ENCODE measurements at regions of chr17 and their contacts with region 1.

Region 1: DNA sequence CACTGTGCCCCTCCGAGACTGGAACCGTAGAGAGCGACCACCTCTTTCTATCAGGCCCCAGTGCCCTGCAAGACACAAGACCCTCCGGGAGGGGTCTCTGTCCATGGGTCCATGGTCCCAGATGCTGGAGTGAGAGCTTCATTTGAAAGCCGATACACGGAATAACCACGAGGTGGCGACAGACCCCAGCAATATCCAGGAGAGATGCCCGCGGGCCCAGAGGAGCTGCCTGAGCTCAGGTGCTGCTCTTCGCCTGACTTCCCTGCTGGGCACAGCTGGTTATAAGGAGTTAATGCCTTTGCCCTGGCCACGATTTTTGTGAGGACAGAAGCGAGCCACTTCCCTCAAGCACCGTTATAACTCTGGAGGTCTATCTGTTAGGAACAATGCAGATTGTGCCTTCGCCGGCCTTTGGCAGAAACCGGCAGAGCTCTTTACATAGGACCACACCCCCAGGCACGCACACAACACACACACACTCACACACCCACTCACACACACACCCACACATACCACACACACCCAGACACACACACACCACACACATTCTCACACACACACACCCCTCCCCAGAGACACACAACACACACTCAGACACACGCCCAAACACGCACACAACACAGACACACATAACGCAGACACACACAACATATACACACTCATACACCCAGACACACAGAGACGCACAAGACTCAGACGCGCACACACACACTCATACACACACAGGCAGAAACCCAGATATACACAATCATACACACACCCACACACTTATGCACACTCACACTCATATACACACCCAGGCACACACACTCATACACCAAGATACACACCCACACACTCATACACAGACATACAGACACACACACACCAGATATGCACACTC is 436.4 kb downstream of the SOX9 start:
- DNase-seq: peak; percentile 91
- H3K4me3 ChIP-seq: no peak overlapping the region; a peak in 1 of 4 replicates
- H3K27ac ChIP-seq: no peak overlapping the region
- H3K4me1 ChIP-seq: no peaks in the 10 kb centered on the region
- H3K27me3 ChIP-seq: no peaks in the 10 kb centered on the region
- CTCF ChIP-seq: peak; percentile 98
- EP300 ChIP-seq: no peak
- RAD21 ChIP-seq: peak; percentile 93

Region 2: GRCh38 chr17:70767102-70767701 is 1790.0 kb before region 1 on chr17:
- CTCF ChIA-PET with region 1: interaction called, 16 read pairs
- POLR2A ChIA-PET with region 1: no interaction called
- DNase-seq: peak; percentile 60
- H3K4me3 ChIP-seq: no peak overlapping the region; a peak in 1 of 4 replicates
- H3K27ac ChIP-seq: no peak overlapping the region
- H3K4me1 ChIP-seq: no peaks in the 10 kb centered on the region; a peak in 1 of 4 replicates
- H3K27me3 ChIP-seq: no peaks in the 10 kb centered on the region
- CTCF ChIP-seq: peak; percentile 99
- EP300 ChIP-seq: no peak
- RAD21 ChIP-seq: peak; percentile 95

Region 3: DNA sequence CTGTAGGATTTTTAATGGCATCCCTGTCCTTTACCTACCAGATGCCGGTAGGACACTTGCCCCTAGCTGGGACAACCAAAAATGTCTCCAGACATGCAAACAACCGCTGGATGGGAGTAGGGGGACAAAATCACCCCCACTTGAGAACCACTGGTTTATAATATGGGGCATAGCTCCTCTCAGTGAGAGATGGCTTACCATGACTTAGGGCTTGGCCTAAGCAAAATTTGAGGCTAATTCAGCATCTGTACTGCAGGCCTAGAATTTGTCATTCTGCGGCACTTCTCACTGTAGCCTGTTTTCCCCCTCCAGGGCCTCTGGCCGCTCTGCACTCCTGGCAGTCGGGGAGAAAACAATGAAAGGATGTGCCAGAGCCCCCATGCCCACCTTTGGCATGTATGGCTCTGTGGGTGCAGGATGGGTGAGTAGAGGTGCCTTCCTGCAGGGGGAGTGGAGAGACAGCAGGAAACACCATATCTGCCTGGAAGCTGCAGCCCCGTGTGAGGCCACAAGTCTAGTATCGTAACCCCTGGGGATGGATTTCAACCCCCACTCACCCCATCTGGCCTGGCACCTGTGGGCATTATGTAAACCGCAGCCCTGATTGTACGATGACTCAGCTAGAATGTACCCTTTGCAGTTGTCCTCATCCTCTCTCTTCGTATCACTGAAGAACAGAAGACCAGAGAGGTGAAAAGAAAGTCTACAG is 168.3 kb before region 1 on chr17:
- CTCF ChIA-PET with region 1: no interaction called
- POLR2A ChIA-PET with region 1: no interaction called
- DNase-seq: no peak
- H3K4me3 ChIP-seq: no peak overlapping the region
- H3K27ac ChIP-seq: peak overlapping the region in 1 of 2 experiments; percentile 93; a peak in 2 of 4 replicates
- H3K4me1 ChIP-seq: peaks cover 6 to 67% of the 10 kb centered on the region in 2 experiments; a peak in 3 of 4 replicates
- H3K27me3 ChIP-seq: no peaks in the 10 kb centered on the region
- CTCF ChIP-seq: peak; percentile 45
- EP300 ChIP-seq: peak in 1 of 2 experiments; percentile 75; a peak in 1 of 4 replicates
- RAD21 ChIP-seq: peak; percentile 39

Region 4: GRCh38 chr17:72403713-72404209 is 153.4 kb before region 1 on chr17:
- CTCF ChIA-PET with region 1: no interaction called
- POLR2A ChIA-PET with region 1: no interaction called
- DNase-seq: no peak
- H3K4me3 ChIP-seq: no peak overlapping the region
- H3K27ac ChIP-seq: peak overlapping the region in 1 of 2 experiments; percentile 99; a peak in 1 of 4 replicates
- H3K4me1 ChIP-seq: peaks cover 22 to 51% of the 10 kb centered on the region in 2 experiments
- H3K27me3 ChIP-seq: no peaks in the 10 kb centered on the region
- CTCF ChIP-seq: no peak
- EP300 ChIP-seq: no peak
- RAD21 ChIP-seq: no peak

Region 5: GRCh38 chr17:72465191-72466024 is 91.8 kb before region 1 on chr17:
- CTCF ChIA-PET with region 1: no interaction called
- POLR2A ChIA-PET with region 1: no interaction called
- DNase-seq: no peak
- H3K4me3 ChIP-seq: peak overlapping the region in 1 of 2 experiments; percentile 38; a peak in 1 of 4 replicates
- H3K27ac ChIP-seq: peak overlapping the region in 1 of 2 experiments; percentile 93; a peak in 2 of 4 replicates
- H3K4me1 ChIP-seq: peaks cover 2 to 12% of the 10 kb centered on the region in 2 experiments; a peak in 3 of 4 replicates
- H3K27me3 ChIP-seq: no peaks in the 10 kb centered on the region
- CTCF ChIP-seq: no peak
- EP300 ChIP-seq: peak in 1 of 2 experiments; percentile 55; a peak in 1 of 4 replicates
- RAD21 ChIP-seq: no peak

Region 6: GRCh38 chr17:72580321-72581127 is 23.3 kb after region 1 on chr17:
- CTCF ChIA-PET with region 1: interaction called, 33 read pairs
- POLR2A ChIA-PET with region 1: no interaction called
- DNase-seq: no peak
- H3K4me3 ChIP-seq: no peak overlapping the region
- H3K27ac ChIP-seq: no peak overlapping the region
- H3K4me1 ChIP-seq: peaks cover 0 to 12% of the 10 kb centered on the region in 2 experiments; a peak in 1 of 4 replicates
- H3K27me3 ChIP-seq: no peaks in the 10 kb centered on the region
- CTCF ChIP-seq: no peak
- EP300 ChIP-seq: no peak
- RAD21 ChIP-seq: no peak

Region 7: GRCh38 chr17:72631949-72632684 is 74.9 kb after region 1 on chr17:
- CTCF ChIA-PET with region 1: interaction called, 14 read pairs
- POLR2A ChIA-PET with region 1: no interaction called
- DNase-seq: no peak
- H3K4me3 ChIP-seq: no peak overlapping the region
- H3K27ac ChIP-seq: no peak overlapping the region
- H3K4me1 ChIP-seq: peaks cover 0 to 5% of the 10 kb centered on the region in 2 experiments; a peak in 1 of 4 replicates
- H3K27me3 ChIP-seq: no peaks in the 10 kb centered on the region
- CTCF ChIP-seq: no peak
- EP300 ChIP-seq: no peak
- RAD21 ChIP-seq: no peak

Region 8: DNA sequence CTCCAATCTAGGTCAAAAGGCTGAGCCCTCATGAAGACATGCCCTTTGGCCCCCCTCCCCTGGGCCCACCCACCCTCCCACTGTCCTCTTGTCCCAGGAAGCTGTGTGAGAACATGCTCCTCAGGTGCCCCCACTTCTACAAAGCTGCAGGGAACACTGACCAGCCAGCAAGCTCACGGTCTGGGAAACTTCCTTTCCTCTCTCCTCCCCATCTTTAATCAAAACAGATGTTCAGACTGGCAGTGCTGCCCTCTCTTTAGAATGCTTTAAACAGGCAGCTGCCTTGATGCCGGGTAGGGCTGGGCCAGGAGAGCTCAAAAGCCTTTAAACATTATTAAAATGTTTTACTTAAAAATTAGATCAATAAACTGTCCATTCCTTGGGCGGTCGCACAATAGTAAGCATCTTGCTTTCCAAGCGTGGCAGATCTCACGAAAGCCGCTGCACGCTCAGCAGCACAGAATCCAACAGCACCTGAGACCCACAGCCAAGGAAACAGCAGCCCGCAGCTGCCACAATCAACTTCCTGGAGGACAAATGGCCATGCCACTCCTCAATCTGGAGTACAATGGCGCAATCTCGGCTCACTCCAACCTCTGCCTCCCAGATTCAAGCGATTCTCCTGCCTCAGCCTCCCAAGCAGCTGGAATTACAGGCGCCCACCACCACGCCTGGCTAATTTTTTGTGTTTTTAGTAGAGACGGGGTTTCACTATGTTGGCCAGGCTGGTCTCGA is 136.1 kb after region 1 on chr17:
- CTCF ChIA-PET with region 1: interaction called, 32 read pairs
- POLR2A ChIA-PET with region 1: no interaction called
- DNase-seq: peak; percentile 74
- H3K4me3 ChIP-seq: no peak overlapping the region
- H3K27ac ChIP-seq: peak overlapping the region; percentile 74 to 91
- H3K4me1 ChIP-seq: peaks cover 23 to 29% of the 10 kb centered on the region in 2 experiments; a peak in 3 of 4 replicates
- H3K27me3 ChIP-seq: no peaks in the 10 kb centered on the region
- CTCF ChIP-seq: no peak
- EP300 ChIP-seq: no peak
- RAD21 ChIP-seq: no peak

Region 9: GRCh38 chr17:72985881-72986720 is 428.9 kb after region 1 on chr17:
- CTCF ChIA-PET with region 1: interaction called, 10 read pairs
- POLR2A ChIA-PET with region 1: no interaction called
- DNase-seq: peak; percentile 85
- H3K4me3 ChIP-seq: no peak overlapping the region; a peak in 1 of 4 replicates
- H3K27ac ChIP-seq: no peak overlapping the region
- H3K4me1 ChIP-seq: peaks cover 5 to 12% of the 10 kb centered on the region in 2 experiments; a peak in 2 of 4 replicates
- H3K27me3 ChIP-seq: no peaks in the 10 kb centered on the region
- CTCF ChIP-seq: peak; percentile 97
- EP300 ChIP-seq: no peak
- RAD21 ChIP-seq: peak; percentile 96

Region 10: DNA sequence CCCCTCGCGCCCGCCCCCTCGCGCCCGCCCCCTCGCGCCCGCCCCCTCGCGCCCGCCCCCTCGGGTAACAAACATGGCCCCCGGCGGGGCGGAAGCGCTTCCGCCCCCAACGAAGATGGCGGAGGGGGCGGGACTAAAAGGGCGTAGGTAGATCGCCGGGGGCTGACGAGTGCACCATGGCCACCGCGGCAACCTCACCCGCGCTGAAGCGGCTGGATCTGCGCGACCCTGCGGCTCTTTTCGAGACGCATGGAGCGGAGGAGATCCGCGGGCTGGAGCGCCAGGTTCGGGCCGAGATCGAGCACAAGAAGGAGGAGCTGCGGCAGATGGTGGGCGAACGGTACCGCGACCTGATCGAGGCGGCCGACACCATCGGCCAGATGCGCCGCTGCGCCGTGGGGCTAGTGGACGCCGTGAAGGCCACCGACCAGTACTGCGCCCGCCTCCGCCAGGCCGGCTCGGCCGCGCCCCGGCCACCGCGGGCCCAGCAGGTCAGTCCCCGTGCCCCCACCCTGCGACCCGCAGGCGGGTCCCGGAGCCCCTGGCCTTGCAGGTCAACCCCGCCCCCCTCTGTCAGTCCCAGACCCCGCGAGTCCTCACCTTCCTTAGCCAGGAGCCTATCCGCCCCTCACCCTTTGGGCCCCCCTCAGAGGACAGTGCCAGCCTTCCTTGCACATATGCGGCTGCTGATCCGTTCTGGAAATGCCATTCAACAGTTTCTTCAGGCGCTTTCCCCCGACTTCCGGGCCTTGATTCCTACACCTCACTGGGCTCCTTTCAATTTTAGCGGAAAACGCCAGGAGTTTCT is 635.9 kb after region 1 on chr17 and contains the start of gene COG1:
- CTCF ChIA-PET with region 1: interaction called, 79 read pairs
- POLR2A ChIA-PET with region 1: no interaction called
- DNase-seq: peak; percentile 100
- H3K4me3 ChIP-seq: peak within 1 kb of the TSS; percentile 73 to 76
- H3K27ac ChIP-seq: peak within 1 kb of the TSS; percentile 85 to 95
- H3K4me1 ChIP-seq: peaks cover 5 to 8% of the 10 kb centered on the region in 2 experiments; a peak in 2 of 4 replicates
- H3K27me3 ChIP-seq: no peaks in the 10 kb centered on the region
- CTCF ChIP-seq: no peak
- EP300 ChIP-seq: no peak
- RAD21 ChIP-seq: no peak
- polyA plus RNA-seq, gene COG1: 52.8 and 53.1 TPM in 2 replicates

Measured in SK-N-SH (cell line).